ENCODE measurements at regions of chr2 and their contacts with region 1.

Region 1: DNA sequence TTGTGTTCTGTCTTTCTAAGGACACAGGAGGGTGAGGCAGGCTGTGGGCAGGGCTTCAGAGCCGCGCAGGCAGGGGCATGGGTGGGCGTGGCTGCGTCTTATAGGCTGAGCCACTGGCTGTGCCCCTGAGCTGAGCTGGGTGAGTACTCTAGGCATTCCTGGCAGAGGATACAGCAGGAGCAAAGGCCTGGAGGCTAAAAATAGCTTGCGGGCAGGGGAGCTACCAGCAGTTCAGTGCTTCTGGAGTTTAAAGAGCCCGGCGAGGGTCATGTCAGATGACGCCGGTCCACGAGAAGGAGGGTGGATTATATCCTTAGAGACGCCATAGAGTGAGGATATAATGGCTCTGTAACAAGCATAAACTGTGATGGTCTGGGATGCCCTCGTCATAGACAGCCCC is 31.5 kb upstream of the PDIA6 start:
- DNase-seq: peak; percentile 49 to 79
- H3K4me3 ChIP-seq: peak overlapping the region in 2 of 4 experiments; percentile 2 to 5; a peak in 1 of 8 replicates
- H3K27ac ChIP-seq: no peak overlapping the region
- H3K4me1 ChIP-seq: peaks cover 0 to 6% (median 1%) of the 10 kb centered on the region in 4 experiments; a peak in 5 of 7 replicates
- H3K27me3 ChIP-seq: no peaks in the 10 kb centered on the region
- CTCF ChIP-seq: no peak
- EP300 ChIP-seq: 0 out of 3 replicates have a peak, but pooled peaks of 1 of the 2 experiments have one; percentile 22
- POLR2A ChIP-seq: no peak
- RAD21 ChIP-seq: 0 out of 4 replicates have a peak, but pooled peaks of 1 of the 2 experiments have one; percentile 6

Region 2: DNA sequence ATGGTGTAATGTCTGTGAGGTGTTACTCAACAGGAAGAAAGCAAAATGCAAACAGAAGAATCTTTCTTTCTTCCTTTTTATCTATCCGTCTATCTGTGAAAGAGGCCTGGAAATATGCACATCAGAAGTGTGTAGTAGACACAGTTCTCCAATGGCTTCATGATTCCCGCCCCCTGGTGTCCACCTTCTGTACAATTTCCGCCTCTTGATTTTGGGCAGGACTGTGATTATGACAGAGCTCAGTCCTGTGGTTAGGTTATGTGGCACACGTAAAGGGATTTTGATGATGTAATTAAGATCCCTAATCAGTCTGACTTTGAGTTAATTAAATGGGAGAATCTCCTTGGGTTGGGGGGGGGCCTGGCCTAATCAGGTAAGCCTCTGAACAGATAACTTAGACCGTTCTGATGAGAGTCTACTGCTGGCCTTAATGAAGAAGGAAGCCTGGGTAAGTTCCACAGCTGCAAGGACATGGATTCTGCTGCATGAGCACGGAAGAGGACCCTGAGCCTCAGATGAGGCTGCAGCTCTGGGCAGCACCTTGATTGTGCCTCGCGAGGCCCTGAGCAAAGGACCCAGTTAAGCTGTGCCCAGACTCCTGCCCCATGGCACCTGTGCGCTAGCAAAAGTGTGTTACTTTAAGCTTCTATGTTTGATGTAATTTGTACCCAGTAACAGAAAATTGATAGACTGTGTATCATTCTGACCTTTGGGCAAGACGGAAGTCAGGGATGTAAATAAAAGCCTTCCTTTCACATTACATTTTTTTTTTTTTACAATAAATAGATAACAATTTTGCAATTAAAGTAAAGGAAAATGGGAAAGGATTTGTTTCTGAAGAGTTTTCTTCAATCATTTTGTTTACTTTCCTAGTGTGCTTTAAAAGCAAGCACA is 56.4 kb after region 1 on chr2:
- CTCF ChIA-PET with region 1: interaction called, 234 read pairs
- POLR2A ChIA-PET with region 1: no interaction called
- DNase-seq: no peak
- H3K4me3 ChIP-seq: no peak overlapping the region
- H3K27ac ChIP-seq: no peak overlapping the region
- H3K4me1 ChIP-seq: no peaks in the 10 kb centered on the region
- H3K27me3 ChIP-seq: no peaks in the 10 kb centered on the region
- CTCF ChIP-seq: peak in 2 of 3 experiments; percentile 7 to 17; a peak in 1 of 4 replicates
- EP300 ChIP-seq: no peak
- POLR2A ChIP-seq: no peak
- RAD21 ChIP-seq: peak in 1 of 2 experiments; percentile 22; a peak in 1 of 4 replicates

Measured in H1 (cell line).